Common myeloid progenitor, CD34-positive (primary cell): ENCODE measurements at regions of chr17 and their contacts with region 1.

Region 1: DNA sequence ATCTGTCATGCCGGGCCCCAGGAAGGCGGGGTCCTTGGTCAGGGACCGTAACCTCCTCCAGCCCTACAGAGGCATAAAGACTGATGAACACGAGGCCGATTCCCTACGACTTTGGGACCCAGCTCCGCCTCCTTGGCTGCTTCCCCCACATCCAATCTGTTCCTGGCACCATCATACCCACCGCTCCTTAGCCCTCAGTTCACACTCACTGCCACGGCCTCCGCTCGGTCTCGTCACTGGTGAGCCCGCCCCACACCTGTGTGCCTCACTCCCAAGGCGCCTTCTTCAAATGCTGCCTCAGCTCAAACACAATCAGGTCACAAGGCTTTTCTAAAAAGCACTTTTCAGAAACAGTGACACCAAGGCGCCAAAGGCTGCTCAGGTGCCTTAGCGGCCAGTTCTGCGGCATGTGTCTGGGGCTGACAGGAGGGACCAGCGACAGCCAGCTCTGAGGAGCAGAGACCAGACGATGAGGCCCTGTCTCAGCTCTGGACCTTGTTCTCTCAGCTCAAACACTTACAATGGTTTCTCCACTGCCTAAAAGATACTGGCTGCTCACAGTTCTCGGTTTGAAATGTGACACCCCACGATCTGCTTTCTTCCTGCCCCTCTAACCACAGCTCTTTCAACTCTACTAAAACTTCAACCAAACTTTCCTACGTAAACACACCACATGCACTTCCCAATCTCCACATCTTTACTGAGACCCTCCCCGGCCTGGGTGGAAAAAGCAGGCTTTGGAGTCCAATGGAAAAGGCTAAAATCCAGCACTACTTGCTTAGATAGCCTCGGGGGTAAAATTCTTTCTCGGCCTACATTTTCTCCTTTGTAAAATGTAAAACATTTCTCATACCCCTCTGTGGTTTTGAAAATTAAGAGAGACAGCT is 33.2 kb downstream of the CYB5D2 start:
- DNase-seq: no peak
- H3K4me3 ChIP-seq: no peak overlapping the region
- H3K27ac ChIP-seq: peak overlapping the region; percentile 18 to 27
- H3K4me1 ChIP-seq: peaks cover 0 to 14% (median 3%) of the 10 kb centered on the region in 4 experiments
- H3K27me3 ChIP-seq: no peaks in the 10 kb centered on the region

Region 2: GRCh38 chr17:4187076-4187475 is 10.9 kb after region 1 on chr17:
- CTCF ChIA-PET with region 1: interaction called, 12 read pairs
- POLR2A ChIA-PET with region 1: no interaction called
- DNase-seq: no peak
- H3K4me3 ChIP-seq: no peak overlapping the region
- H3K27ac ChIP-seq: no peak overlapping the region
- H3K4me1 ChIP-seq: peaks cover 13 to 39% (median 28%) of the 10 kb centered on the region in 4 experiments
- H3K27me3 ChIP-seq: no peaks in the 10 kb centered on the region